Ascending aorta (tissue), 2 donors: ENCODE measurements at regions of chr6 and their contacts with region 1.

Region 1: GRCh38 chr6:3990692-3991501 is 88.0 kb downstream of the FAM217A start:
- DNase-seq: peak; percentile 65 to 95
- H3K4me3 ChIP-seq: peak overlapping the region; percentile 54 to 69
- H3K27ac ChIP-seq: peak overlapping the region; percentile 77 to 78
- H3K4me1 ChIP-seq: peaks cover 0 to 11% of the 10 kb centered on the region in 2 donors
- H3K27me3 ChIP-seq: no peaks in the 10 kb centered on the region
- CTCF ChIP-seq: peak; percentile 82 to 89 (median 88)

Region 2: DNA sequence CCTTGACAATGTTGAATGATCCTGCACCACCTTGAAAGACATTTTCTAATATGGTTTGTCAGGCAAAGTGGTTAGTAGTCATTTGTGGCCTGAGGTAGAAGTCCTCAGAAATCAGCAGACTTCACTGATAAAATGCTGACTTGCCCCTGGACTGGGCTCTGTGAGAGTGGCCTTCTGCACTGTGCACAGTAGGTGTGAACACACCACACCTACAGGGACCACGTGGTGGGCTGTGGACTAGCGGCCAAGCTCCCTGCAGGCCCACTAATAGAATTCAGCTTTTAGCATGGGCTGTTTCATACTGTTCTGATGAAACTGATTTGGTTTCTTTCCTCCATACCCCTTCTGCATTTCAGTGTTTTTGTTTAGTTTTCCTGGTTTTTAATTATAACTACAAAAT is 865.1 kb before region 1 on chr6:
- intact Hi-C with region 1: loop called (anchors 10 kb)
- DNase-seq: no peak
- H3K4me3 ChIP-seq: no peak overlapping the region
- H3K27ac ChIP-seq: no peak overlapping the region
- H3K4me1 ChIP-seq: no peaks in the 10 kb centered on the region
- H3K27me3 ChIP-seq: no peaks in the 10 kb centered on the region
- CTCF ChIP-seq: no peak

Region 3: DNA sequence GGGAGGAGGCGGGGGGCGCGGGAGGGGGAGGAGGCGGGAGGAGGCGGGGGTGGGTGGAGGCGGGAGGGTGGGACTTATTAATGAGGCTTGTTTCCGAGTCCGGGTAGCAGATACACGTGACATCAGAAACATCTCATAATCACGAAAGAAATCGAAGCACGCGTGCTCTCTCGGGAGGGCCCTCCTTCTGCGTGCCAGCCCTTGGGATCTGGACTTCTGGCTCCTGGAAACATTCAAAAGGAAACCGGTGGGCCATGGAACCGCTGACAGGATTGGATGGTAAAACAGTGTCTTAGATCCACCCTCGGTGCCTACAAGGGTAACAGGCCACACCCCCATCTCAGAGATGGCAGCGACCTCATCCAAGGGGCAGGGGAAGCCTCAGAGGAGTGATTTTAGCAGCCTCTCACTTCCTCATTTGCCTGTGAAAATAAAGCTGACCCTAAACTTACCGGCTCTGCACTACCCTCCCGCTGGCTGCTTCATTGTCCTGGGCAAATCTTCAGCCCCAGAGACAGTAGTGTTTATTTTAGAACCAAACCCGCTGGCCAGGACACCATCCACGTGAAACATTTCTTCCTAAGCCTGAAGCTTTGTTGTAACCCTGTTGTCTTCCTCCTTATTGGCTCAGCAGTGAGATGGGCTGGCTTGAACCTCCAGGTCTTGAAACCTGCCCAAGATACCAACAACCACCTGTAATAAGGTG is 634.7 kb before region 1 on chr6:
- intact Hi-C with region 1: loop called (anchors 5 kb)
- DNase-seq: peak; percentile 27 to 88
- H3K4me3 ChIP-seq: peak overlapping the region; percentile 37 to 59
- H3K27ac ChIP-seq: peak overlapping the region; percentile 86 to 89
- H3K4me1 ChIP-seq: peaks cover 3 to 7% of the 10 kb centered on the region in 2 donors
- H3K27me3 ChIP-seq: no peaks in the 10 kb centered on the region
- CTCF ChIP-seq: no peak

Region 4: GRCh38 chr6:3751730-3752542 is 239.0 kb before region 1 on chr6:
- intact Hi-C with region 1: loop called (anchors 2 kb)
- DNase-seq: peak; percentile 59 to 96
- H3K4me3 ChIP-seq: peak overlapping the region; percentile 81 to 82
- H3K27ac ChIP-seq: peak overlapping the region; percentile 100
- H3K4me1 ChIP-seq: peaks cover 0 to 3% of the 10 kb centered on the region in 2 donors
- H3K27me3 ChIP-seq: no peaks in the 10 kb centered on the region
- CTCF ChIP-seq: peak; percentile 33 to 50 (median 47)

Region 5: DNA sequence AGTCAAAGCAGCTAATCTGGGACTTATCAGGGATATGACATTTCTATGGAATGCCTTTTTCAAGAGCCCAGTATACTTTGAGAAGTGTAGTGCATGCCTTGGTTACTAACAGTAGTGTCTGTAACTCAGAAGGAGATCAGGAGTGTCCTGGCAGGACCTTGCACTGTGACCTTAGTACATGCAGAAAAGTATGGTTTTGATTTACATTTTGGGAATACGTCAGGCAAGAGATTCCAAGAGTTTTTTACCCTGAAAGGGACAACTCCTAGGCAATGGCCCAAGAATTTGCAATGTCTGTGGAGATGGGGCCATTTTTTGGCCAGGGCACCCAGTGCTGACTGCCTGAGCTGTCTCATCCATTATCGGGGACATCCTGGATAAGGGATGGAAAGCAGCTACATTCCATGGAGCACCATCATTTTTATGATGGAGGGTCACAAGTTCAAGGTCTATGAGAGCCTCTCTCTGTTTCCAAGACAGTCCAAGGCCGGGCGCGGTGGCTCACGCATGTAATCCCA is 61.6 kb before region 1 on chr6:
- intact Hi-C with region 1: loop called (anchors 5 kb)
- DNase-seq: no peak
- H3K4me3 ChIP-seq: no peak overlapping the region
- H3K27ac ChIP-seq: peak overlapping the region; percentile 39 to 52
- H3K4me1 ChIP-seq: peaks cover 0 to 9% of the 10 kb centered on the region in 2 donors
- H3K27me3 ChIP-seq: no peaks in the 10 kb centered on the region
- CTCF ChIP-seq: no peak